ENCODE measurements at regions of chr7 and their contacts with region 1.

Region 1: GRCh38 chr7:6228361-6229229 is 43.8 kb downstream of the CYTH3 start:
- DNase-seq: peak; percentile 66
- H3K4me3 ChIP-seq: peak overlapping the region; percentile 15
- H3K27ac ChIP-seq: peak overlapping the region; percentile 73
- H3K4me1 ChIP-seq: peaks cover 58% of the 10 kb centered on the region
- H3K27me3 ChIP-seq: no peaks in the 10 kb centered on the region
- CTCF ChIP-seq: no peak

Region 2: DNA sequence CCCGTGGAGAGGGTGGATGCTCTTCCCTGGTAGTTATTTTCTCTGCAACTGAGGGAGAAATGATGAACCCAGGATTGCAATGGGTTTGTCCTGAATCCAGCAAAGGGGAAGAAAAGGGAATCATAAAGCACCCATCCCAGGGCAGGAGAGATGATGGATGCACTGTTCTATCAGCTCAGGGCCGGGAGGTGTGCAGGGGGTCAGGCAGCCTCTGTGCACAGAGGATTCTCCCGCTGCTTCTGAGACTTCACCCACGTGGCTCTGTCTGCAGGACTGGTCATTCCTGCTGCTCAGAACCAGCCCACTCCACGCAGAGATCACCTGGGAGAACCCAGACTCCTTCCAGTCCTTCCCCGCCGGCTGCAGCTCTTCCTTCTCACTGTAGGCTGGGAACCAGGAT is 1112.2 kb before region 1 on chr7:
- CTCF ChIA-PET with region 1: no interaction called
- POLR2A ChIA-PET with region 1: interaction called, 10 read pairs
- intact Hi-C with region 1: no loop called
- DNase-seq: no peak
- H3K4me3 ChIP-seq: no peak overlapping the region
- H3K27ac ChIP-seq: no peak overlapping the region
- H3K4me1 ChIP-seq: no peaks in the 10 kb centered on the region
- H3K27me3 ChIP-seq: no peaks in the 10 kb centered on the region
- CTCF ChIP-seq: no peak

Region 3: DNA sequence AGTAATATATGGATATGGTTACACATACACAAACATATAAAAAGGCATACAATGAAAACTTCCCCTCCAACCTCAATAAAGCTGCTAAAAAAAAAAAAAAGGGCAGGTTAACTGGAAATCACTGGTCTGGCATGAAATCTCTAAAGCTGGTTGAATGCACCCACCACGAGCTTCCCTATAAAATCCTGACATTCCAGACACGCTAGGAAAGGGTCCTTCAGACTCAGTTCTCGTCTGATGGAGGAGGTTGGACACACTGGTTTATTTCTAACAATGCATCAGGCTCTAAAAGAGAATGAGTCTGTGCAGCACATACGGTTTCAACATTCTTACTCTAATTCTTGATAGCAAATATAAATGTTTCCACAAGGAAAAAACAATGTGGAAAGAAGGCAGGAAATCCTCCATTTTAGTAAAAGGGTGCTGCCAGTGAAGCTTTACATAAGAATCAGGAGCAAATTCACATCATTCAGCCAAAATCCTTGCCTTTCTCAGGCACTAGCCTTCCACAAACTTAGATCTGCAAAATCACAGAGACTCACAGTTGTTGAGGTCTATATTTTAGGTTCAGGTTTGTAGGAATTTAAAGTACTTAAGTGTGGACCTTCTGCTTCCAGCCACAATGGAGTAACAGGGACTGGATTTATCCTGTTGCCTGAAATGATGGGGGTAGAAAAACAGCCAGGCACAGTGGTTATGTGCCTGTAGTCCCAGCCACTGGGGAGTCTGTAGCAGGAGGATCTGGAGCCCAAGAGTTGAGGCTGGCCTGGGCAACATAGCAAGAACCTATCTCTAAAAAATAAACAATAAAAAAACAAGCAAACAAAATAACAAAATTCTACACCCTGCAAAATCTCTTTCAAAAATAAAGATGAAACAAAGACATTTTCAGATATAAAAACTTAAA is 29.7 kb before region 1 on chr7:
- CTCF ChIA-PET with region 1: no interaction called
- POLR2A ChIA-PET with region 1: no interaction called
- intact Hi-C with region 1: no loop called
- DNase-seq: no peak
- H3K4me3 ChIP-seq: no peak overlapping the region
- H3K27ac ChIP-seq: no peak overlapping the region
- H3K4me1 ChIP-seq: no peaks in the 10 kb centered on the region
- H3K27me3 ChIP-seq: no peaks in the 10 kb centered on the region
- CTCF ChIP-seq: no peak